CD8-positive, alpha-beta T cell (primary cell): ENCODE measurements at regions of chr13 and their contacts with region 1.

Region 1: GRCh38 chr13:27171827-27172494 is 350 bp upstream of the USP12 start:
- DNase-seq: peak; percentile 88 to 97 (median 92)
- ATAC-seq: peak; percentile 84
- H3K4me3 ChIP-seq: peak overlapping the region; percentile 72 to 81
- H3K4me3 Mint-ChIP-seq: peak overlapping the region; percentile 79
- H3K27ac ChIP-seq: peak overlapping the region; percentile 74 to 91
- H3K27ac Mint-ChIP-seq: peak overlapping the region; percentile 89
- H3K4me1 ChIP-seq: peaks cover 30% of the 10 kb centered on the region
- H3K4me1 Mint-ChIP-seq: peaks cover 42% of the 10 kb centered on the region
- H3K27me3 ChIP-seq: no peaks in the 10 kb centered on the region
- H3K27me3 Mint-ChIP-seq: no peaks in the 10 kb centered on the region
- CTCF ChIP-seq: no peak

Region 2: GRCh38 chr13:25286969-25287961 is 1884.7 kb before region 1 on chr13 and contains the start of gene MTMR6:
- CTCF ChIA-PET with region 1: no interaction called
- POLR2A ChIA-PET with region 1: no interaction called
- intact Hi-C with region 1: loop called in 1 of 2 experiments (anchors 5 kb)
- DNase-seq: peak; percentile 90 to 98 (median 94)
- ATAC-seq: peak; percentile 81
- H3K4me3 ChIP-seq: peak within 1 kb of the TSS; percentile 83 to 95
- H3K4me3 Mint-ChIP-seq: peak within 1 kb of the TSS; percentile 98
- H3K27ac ChIP-seq: peak within 1 kb of the TSS; percentile 94 to 97
- H3K27ac Mint-ChIP-seq: peak within 1 kb of the TSS; percentile 99
- H3K4me1 ChIP-seq: peaks cover 23% of the 10 kb centered on the region
- H3K4me1 Mint-ChIP-seq: peaks cover 41% of the 10 kb centered on the region
- H3K27me3 ChIP-seq: peaks cover 0 to 2% of the 10 kb centered on the region in 2 experiments
- H3K27me3 Mint-ChIP-seq: peaks cover 10% of the 10 kb centered on the region
- CTCF ChIP-seq: peak; percentile 99
- total RNA-seq, gene MTMR6: 41.9 to 44.4 TPM

Region 3: GRCh38 chr13:26253787-26254582 is 918.0 kb before region 1 on chr13 and contains the start of gene CDK8:
- CTCF ChIA-PET with region 1: no interaction called
- POLR2A ChIA-PET with region 1: no interaction called
- intact Hi-C with region 1: loop called in 1 of 2 experiments (anchors 5 kb)
- DNase-seq: peak; percentile 78 to 95 (median 90)
- ATAC-seq: peak; percentile 87
- H3K4me3 ChIP-seq: peak within 1 kb of the TSS; percentile 79 to 100
- H3K4me3 Mint-ChIP-seq: peak within 1 kb of the TSS; percentile 90
- H3K27ac ChIP-seq: peak within 1 kb of the TSS; percentile 59 to 92
- H3K27ac Mint-ChIP-seq: peak within 1 kb of the TSS; percentile 88
- H3K4me1 ChIP-seq: peaks cover 27% of the 10 kb centered on the region
- H3K4me1 Mint-ChIP-seq: peaks cover 37% of the 10 kb centered on the region
- H3K27me3 ChIP-seq: no peaks in the 10 kb centered on the region
- H3K27me3 Mint-ChIP-seq: peaks cover 2% of the 10 kb centered on the region
- CTCF ChIP-seq: no peak
- total RNA-seq, gene CDK8: 4.9 to 5.3 TPM

Region 4: DNA sequence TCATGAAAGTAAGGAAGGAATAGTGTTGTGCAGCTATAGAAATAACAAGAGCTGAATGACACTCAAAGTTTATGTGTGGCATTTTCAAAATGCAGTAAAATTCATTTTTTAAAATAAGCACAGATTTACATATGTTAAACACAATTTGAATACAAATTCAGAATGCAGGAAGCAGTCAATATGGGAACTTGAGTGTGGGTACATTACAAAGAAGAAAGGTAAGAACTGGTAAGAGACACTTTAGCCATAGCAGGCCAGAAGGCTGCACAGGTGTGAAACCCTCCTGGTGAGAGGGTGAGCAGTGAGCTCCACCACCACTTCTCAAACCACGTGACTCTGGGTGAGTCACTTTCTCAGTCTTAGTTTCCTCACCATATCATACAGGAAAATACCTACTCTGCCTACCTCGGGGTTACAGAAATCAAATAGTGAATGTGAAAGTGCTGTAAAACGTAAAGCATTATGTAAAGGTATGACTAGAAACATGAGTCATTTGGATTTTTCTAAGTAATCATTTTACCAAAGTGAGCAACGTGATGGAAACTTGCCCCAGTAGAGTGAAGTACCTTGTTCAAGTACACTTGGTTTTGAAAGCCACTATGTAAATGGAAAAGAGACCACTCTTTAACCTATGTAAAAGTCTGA is 40.9 kb before region 1 on chr13:
- CTCF ChIA-PET with region 1: no interaction called
- POLR2A ChIA-PET with region 1: no interaction called
- intact Hi-C with region 1: loop called (anchors 2 to 5 kb)
- DNase-seq: peak in 8 of 9 experiments; percentile 42 to 91 (median 64)
- ATAC-seq: peak; percentile 91
- H3K4me3 ChIP-seq: peak overlapping the region in 1 of 2 experiments; percentile 18
- H3K4me3 Mint-ChIP-seq: no peak overlapping the region
- H3K27ac ChIP-seq: peak overlapping the region in 1 of 2 experiments; percentile 80
- H3K27ac Mint-ChIP-seq: peak overlapping the region; percentile 71
- H3K4me1 ChIP-seq: peaks cover 33% of the 10 kb centered on the region
- H3K4me1 Mint-ChIP-seq: peaks cover 84% of the 10 kb centered on the region
- H3K27me3 ChIP-seq: no peaks in the 10 kb centered on the region
- H3K27me3 Mint-ChIP-seq: no peaks in the 10 kb centered on the region
- CTCF ChIP-seq: no peak

Region 5: GRCh38 chr13:27362064-27362883 is 190.3 kb after region 1 on chr13:
- CTCF ChIA-PET with region 1: interaction called, 3 read pairs
- POLR2A ChIA-PET with region 1: no interaction called
- intact Hi-C with region 1: loop called in 1 of 2 experiments (anchors 5 kb)
- DNase-seq: peak; percentile 56 to 86 (median 78)
- ATAC-seq: peak; percentile 90
- H3K4me3 ChIP-seq: peak overlapping the region; percentile 17 to 39
- H3K4me3 Mint-ChIP-seq: peak overlapping the region; percentile 67
- H3K27ac ChIP-seq: no peak overlapping the region
- H3K27ac Mint-ChIP-seq: no peak overlapping the region
- H3K4me1 ChIP-seq: peaks cover 5% of the 10 kb centered on the region
- H3K4me1 Mint-ChIP-seq: peaks cover 5% of the 10 kb centered on the region
- H3K27me3 ChIP-seq: peaks cover 0 to 10% of the 10 kb centered on the region in 2 experiments
- H3K27me3 Mint-ChIP-seq: peaks cover 17% of the 10 kb centered on the region
- CTCF ChIP-seq: peak; percentile 73

Region 6: GRCh38 chr13:27620377-27621115 is 448.6 kb after region 1 on chr13 and contains the start of gene LNX2:
- CTCF ChIA-PET with region 1: no interaction called
- POLR2A ChIA-PET with region 1: no interaction called
- intact Hi-C with region 1: loop called (anchors 1 to 2 kb)
- DNase-seq: peak; percentile 94 to 98 (median 97)
- ATAC-seq: peak; percentile 83
- H3K4me3 ChIP-seq: peak within 1 kb of the TSS; percentile 67 to 96
- H3K4me3 Mint-ChIP-seq: peak within 1 kb of the TSS; percentile 96
- H3K27ac ChIP-seq: peak within 1 kb of the TSS; percentile 83 to 98
- H3K27ac Mint-ChIP-seq: peak within 1 kb of the TSS; percentile 97
- H3K4me1 ChIP-seq: peaks cover 36% of the 10 kb centered on the region
- H3K4me1 Mint-ChIP-seq: peaks cover 63% of the 10 kb centered on the region
- H3K27me3 ChIP-seq: no peaks in the 10 kb centered on the region
- H3K27me3 Mint-ChIP-seq: no peaks in the 10 kb centered on the region
- CTCF ChIP-seq: no peak
- total RNA-seq, gene LNX2: 3.0 to 3.5 TPM